ENCODE measurements at regions of chr6 and their contacts with region 1.

Region 1: DNA sequence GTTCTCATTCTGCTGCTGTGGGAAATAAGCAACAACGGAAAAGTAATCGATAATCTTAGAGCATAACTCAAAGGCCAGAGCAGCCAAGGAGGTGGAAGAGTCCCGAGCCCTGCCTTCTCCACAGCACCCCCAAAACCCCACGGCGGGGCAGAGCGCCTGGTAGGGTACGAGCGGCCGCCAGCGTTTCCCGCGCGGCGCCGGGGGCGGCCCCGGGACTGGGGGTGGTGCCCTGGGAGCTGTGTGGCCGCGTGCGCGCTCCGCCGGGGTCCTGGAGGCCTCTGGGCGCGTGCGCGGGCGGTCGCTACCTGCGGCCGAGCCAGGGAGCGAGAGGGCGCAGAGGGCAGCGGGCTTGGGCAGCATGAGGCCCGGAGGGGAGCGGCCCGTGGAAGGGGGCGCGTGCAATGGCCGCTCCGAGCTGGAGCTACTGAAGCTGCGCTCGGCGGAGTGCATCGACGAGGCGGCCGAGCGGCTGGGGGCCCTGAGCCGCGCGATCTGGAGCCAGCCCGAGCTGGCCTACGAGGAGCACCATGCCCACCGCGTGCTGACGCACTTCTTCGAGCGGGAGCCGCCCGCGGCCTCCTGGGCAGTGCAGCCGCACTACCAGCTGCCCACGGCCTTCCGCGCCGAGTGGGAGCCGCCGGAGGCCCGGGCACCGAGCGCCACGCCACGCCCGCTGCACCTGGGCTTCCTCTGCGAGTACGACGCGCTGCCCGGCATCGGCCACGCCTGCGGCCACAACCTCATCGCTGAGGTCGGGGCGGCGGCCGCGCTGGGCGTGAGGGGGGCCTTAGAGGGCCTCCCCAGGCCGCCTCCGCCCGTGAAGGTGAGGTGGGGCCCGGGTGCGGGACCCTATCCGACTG is at the start of gene PM20D2:
- DNase-seq: peak; percentile 69
- H3K4me3 Mint-ChIP-seq: peak within 1 kb of the TSS; percentile 80
- H3K27ac Mint-ChIP-seq: peak within 1 kb of the TSS; percentile 87
- H3K4me1 Mint-ChIP-seq: peaks cover 22% of the 10 kb centered on the region
- H3K27me3 Mint-ChIP-seq: no peaks in the 10 kb centered on the region
- CTCF ChIP-seq: no peak
- total RNA-seq, gene PM20D2: 9.9 and 11.9 TPM in 2 replicates

Region 2: DNA sequence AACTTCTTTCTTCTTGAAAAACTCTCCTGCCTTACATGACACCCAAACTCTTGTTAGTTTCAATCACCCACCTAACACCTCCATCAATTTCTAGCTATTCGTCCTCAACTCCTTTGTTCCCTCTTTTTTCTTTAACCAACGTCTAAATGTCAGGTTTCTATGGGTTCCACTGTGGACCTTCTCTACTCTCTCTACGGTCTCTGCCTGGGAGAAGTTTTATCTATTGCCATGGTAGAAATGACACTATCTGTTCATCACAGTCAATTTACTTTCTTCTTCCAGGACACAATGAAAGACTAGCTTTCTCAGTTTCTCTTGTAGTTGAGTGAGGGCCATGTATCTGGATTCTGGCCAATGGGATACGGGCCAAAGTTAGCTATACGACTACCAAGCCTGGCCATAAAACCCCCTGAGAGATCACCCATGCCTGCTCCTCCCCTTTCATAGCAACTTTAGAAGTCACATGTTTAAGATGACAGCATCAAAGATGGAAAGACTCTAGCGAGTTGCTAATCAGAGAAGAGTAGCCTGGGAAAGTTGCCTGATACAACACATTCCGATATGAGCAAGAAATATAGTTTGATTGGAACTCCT is 200.5 kb before region 1 on chr6:
- CTCF ChIA-PET with region 1: no interaction called
- POLR2A ChIA-PET with region 1: no interaction called
- intact Hi-C with region 1: no loop called
- DNase-seq: no peak
- H3K4me3 Mint-ChIP-seq: no peak overlapping the region
- H3K27ac Mint-ChIP-seq: no peak overlapping the region
- H3K4me1 Mint-ChIP-seq: no peaks in the 10 kb centered on the region
- H3K27me3 Mint-ChIP-seq: no peaks in the 10 kb centered on the region
- CTCF ChIP-seq: no peak

Region 3: GRCh38 chr6:88963139-88964090 is 182.6 kb before region 1 on chr6 and contains the start of gene RNGTT:
- CTCF ChIA-PET with region 1: no interaction called
- POLR2A ChIA-PET with region 1: interaction called, 10 read pairs
- intact Hi-C with region 1: no loop called
- DNase-seq: peak; percentile 99
- H3K4me3 Mint-ChIP-seq: peak within 1 kb of the TSS; percentile 93
- H3K27ac Mint-ChIP-seq: peak within 1 kb of the TSS; percentile 92
- H3K4me1 Mint-ChIP-seq: peaks cover 14% of the 10 kb centered on the region
- H3K27me3 Mint-ChIP-seq: no peaks in the 10 kb centered on the region
- CTCF ChIP-seq: no peak
- total RNA-seq, gene RNGTT: 14.6 and 20.6 TPM in 2 replicates

Region 4: GRCh38 chr6:89007209-89008000 is 138.6 kb before region 1 on chr6:
- CTCF ChIA-PET with region 1: no interaction called
- POLR2A ChIA-PET with region 1: no interaction called
- intact Hi-C with region 1: no loop called
- DNase-seq: peak; percentile 63
- H3K4me3 Mint-ChIP-seq: no peak overlapping the region
- H3K27ac Mint-ChIP-seq: no peak overlapping the region
- H3K4me1 Mint-ChIP-seq: peaks cover 5% of the 10 kb centered on the region
- H3K27me3 Mint-ChIP-seq: no peaks in the 10 kb centered on the region
- CTCF ChIP-seq: no peak

Region 5: GRCh38 chr6:89117211-89118108 is 28.6 kb before region 1 on chr6 and contains the start of gene SRSF12:
- CTCF ChIA-PET with region 1: interaction called, 21 read pairs
- POLR2A ChIA-PET with region 1: interaction called, 14 read pairs
- intact Hi-C with region 1: no loop called
- DNase-seq: peak; percentile 34
- H3K4me3 Mint-ChIP-seq: peak within 1 kb of the TSS; percentile 79
- H3K27ac Mint-ChIP-seq: no peak within 1 kb of the TSS
- H3K4me1 Mint-ChIP-seq: no peaks in the 10 kb centered on the region
- H3K27me3 Mint-ChIP-seq: no peaks in the 10 kb centered on the region
- CTCF ChIP-seq: no peak
- total RNA-seq, gene SRSF12: 1.1 and 1.2 TPM in 2 replicates

Region 6: DNA sequence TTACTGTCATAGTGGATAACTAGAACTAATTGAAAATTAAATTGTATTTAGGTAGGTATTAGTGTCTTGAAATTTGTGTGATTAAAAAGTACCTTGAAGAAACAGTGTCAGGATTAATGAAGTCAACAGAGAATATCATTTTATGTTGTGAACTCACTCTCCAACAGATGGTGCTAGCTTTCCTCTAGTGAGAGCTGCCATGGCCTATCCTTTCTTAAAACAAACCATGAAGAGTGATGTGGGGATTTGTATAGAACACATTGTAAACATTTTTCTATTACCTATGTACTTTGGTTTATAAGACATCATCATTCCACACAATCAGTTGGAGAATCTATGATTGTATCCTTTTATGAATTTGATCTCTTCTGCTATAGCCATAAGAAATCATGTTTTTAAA is 23.4 kb before region 1 on chr6:
- CTCF ChIA-PET with region 1: interaction called, 21 read pairs
- POLR2A ChIA-PET with region 1: interaction called, 14 read pairs
- intact Hi-C with region 1: no loop called
- DNase-seq: peak; percentile 48
- H3K4me3 Mint-ChIP-seq: no peak overlapping the region
- H3K27ac Mint-ChIP-seq: no peak overlapping the region
- H3K4me1 Mint-ChIP-seq: no peaks in the 10 kb centered on the region
- H3K27me3 Mint-ChIP-seq: no peaks in the 10 kb centered on the region
- CTCF ChIP-seq: peak; percentile 70

Region 7: GRCh38 chr6:89172131-89172530 is 26.1 kb after region 1 on chr6:
- CTCF ChIA-PET with region 1: interaction called, 3 read pairs
- POLR2A ChIA-PET with region 1: interaction called, 16 read pairs
- intact Hi-C with region 1: no loop called
- DNase-seq: peak; percentile 16
- H3K4me3 Mint-ChIP-seq: no peak overlapping the region
- H3K27ac Mint-ChIP-seq: no peak overlapping the region
- H3K4me1 Mint-ChIP-seq: no peaks in the 10 kb centered on the region
- H3K27me3 Mint-ChIP-seq: no peaks in the 10 kb centered on the region
- CTCF ChIP-seq: no peak

Region 8: DNA sequence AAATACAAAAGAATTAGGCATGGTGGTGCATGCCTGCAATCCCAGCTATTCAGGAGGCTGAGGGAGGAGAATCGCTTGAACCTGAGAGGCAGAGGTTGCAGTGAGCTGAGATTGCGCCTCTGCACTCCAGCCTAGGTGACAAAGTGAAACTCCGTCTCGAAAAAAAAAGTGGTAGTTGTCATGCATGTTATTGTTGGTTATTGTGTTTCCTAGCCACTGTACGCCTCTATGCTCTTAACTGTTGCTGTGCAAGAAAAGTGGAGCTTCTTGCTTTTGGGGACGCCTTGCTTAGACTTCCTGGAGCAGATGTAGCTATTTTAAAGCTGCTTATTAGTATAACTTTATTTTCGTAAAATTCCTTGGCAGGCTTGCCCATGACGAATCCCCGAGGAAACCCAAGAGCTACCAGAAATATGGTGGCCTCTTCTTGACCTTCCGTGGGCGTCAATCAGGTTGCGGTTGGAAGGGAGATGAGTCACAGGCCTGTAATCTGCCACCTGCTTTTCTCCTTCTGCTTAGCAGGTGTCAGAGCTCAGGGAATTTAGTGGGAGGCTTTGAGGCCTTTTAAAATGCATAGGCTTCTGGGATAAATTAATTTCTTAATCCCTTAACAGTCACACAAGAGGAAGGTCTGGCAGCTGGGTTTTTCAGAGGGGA is 151.8 kb after region 1 on chr6:
- CTCF ChIA-PET with region 1: no interaction called
- POLR2A ChIA-PET with region 1: interaction called, 4 read pairs
- intact Hi-C with region 1: loop called (anchors 5 kb)
- DNase-seq: peak; percentile 99
- H3K4me3 Mint-ChIP-seq: peak overlapping the region; percentile 59
- H3K27ac Mint-ChIP-seq: peak overlapping the region; percentile 68
- H3K4me1 Mint-ChIP-seq: peaks cover 7% of the 10 kb centered on the region
- H3K27me3 Mint-ChIP-seq: peaks cover 46% of the 10 kb centered on the region
- CTCF ChIP-seq: no peak

Region 9: GRCh38 chr6:89352278-89353117 is 206.5 kb after region 1 on chr6 and contains the start of gene UBE2J1:
- CTCF ChIA-PET with region 1: no interaction called
- POLR2A ChIA-PET with region 1: interaction called, 14 read pairs
- intact Hi-C with region 1: no loop called
- DNase-seq: peak; percentile 89
- H3K4me3 Mint-ChIP-seq: peak within 1 kb of the TSS; percentile 96
- H3K27ac Mint-ChIP-seq: peak within 1 kb of the TSS; percentile 98
- H3K4me1 Mint-ChIP-seq: peaks cover 22% of the 10 kb centered on the region
- H3K27me3 Mint-ChIP-seq: no peaks in the 10 kb centered on the region
- CTCF ChIP-seq: no peak
- total RNA-seq, gene UBE2J1: 39.0 and 40.0 TPM in 2 replicates

Region 10: GRCh38 chr6:89400912-89401399 is 254.9 kb after region 1 on chr6:
- CTCF ChIA-PET with region 1: no interaction called
- POLR2A ChIA-PET with region 1: no interaction called
- intact Hi-C with region 1: no loop called
- DNase-seq: no peak
- H3K4me3 Mint-ChIP-seq: no peak overlapping the region
- H3K27ac Mint-ChIP-seq: no peak overlapping the region
- H3K4me1 Mint-ChIP-seq: no peaks in the 10 kb centered on the region
- H3K27me3 Mint-ChIP-seq: peaks cover 15% of the 10 kb centered on the region
- CTCF ChIP-seq: no peak

Measured in MCF 10A (cell line).